Activated B cell treated with CpG ODN at 0.5 μM for 24 hours (primary cell): ENCODE measurements at regions of chr11 and their contacts with region 1.

Region 1: GRCh38 chr11:78416305-78417178 is 1.1 kb downstream of the GAB2 start:
- DNase-seq: peak; percentile 71
- ATAC-seq: peak; percentile 51
- H3K4me3 Mint-ChIP-seq: peak overlapping the region; percentile 98
- H3K27ac Mint-ChIP-seq: peak overlapping the region; percentile 96
- H3K4me1 Mint-ChIP-seq: peaks cover 79% of the 10 kb centered on the region
- H3K27me3 Mint-ChIP-seq: no peaks in the 10 kb centered on the region
- CTCF ChIP-seq: no peak

Region 2: DNA sequence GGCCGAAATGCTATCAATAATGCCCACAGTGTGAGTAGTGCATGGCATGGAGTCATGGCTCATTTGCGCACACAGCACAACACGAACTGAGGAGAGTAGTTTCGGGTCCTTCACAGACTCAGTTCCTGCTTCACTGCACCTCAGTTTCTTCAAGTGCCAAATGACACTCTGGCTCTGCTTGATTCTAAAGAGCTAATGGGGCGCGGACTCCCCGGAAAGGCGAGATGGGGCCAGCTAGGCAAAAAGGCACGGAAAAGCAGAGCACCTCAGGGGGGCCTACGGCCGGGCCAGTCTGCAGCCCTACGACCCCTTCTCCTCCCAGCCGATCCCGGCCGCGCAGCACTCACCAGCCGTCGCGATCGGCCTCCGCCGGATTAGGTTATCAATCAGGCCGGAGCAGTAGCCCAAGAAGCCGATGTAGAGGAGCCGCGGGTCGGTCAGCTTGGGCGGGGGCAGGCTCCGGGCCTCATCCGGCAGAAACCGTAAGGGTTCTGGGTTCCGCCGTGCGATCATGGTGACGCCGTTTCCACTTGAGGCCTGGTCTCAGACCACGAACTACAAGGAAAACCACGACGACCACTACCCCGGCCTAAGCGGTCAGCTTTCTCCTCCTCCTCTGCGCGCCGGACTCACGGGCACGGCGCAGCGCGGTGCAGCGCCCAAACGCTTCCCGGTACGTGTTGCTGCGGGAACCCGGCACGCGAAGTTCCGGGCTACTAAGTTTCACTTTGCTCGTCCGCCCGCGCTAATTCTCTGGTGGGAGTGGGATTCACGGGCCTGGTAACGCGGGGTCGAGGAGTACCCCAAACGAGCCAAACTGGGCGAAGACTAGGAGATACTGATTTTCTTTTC is 337.1 kb before region 1 on chr11 and contains the start of gene NDUFC2:
- CTCF ChIA-PET with region 1: no interaction called
- POLR2A ChIA-PET with region 1: interaction called, 3 read pairs
- intact Hi-C with region 1: loop called (anchors 2 kb)
- DNase-seq: peak; percentile 60
- ATAC-seq: peak; percentile 79
- H3K4me3 Mint-ChIP-seq: peak within 1 kb of the TSS; percentile 93
- H3K27ac Mint-ChIP-seq: peak within 1 kb of the TSS; percentile 86
- H3K4me1 Mint-ChIP-seq: peaks cover 51% of the 10 kb centered on the region
- H3K27me3 Mint-ChIP-seq: no peaks in the 10 kb centered on the region
- CTCF ChIP-seq: no peak
- total RNA-seq, gene NDUFC2: 83.5 and 88.4 TPM in 2 replicates

Region 3: DNA sequence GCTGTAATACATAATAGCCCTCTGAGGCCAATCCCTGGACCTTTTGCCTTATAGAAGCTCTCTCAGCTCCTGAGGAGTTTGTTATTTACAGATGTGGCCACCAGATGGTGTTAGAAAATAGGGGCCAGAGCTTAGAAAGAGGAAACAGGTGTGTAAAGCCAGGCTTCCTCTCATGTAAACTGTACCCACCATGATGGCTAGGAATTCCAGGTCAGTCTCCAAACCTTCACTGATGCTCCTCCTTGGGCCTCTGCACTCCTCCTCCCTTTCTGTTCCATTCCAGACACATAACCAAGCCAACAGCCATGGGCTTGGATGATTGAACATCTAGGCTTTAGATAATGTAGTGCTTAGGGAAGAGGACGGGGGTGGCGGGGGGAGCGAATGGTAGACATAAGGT is 188.1 kb before region 1 on chr11:
- CTCF ChIA-PET with region 1: interaction called, 9 read pairs
- POLR2A ChIA-PET with region 1: interaction called, 8 read pairs
- intact Hi-C with region 1: loop called (anchors 1 kb)
- DNase-seq: no peak
- ATAC-seq: peak; percentile 66
- H3K4me3 Mint-ChIP-seq: no peak overlapping the region
- H3K27ac Mint-ChIP-seq: no peak overlapping the region
- H3K4me1 Mint-ChIP-seq: peaks cover 42% of the 10 kb centered on the region
- H3K27me3 Mint-ChIP-seq: no peaks in the 10 kb centered on the region
- CTCF ChIP-seq: no peak

Region 4: GRCh38 chr11:78432058-78432515 is 15.5 kb after region 1 on chr11:
- CTCF ChIA-PET with region 1: interaction called, 90 read pairs
- POLR2A ChIA-PET with region 1: interaction called, 113 read pairs
- intact Hi-C with region 1: loop called (anchors 1 kb)
- DNase-seq: no peak
- ATAC-seq: no peak
- H3K4me3 Mint-ChIP-seq: no peak overlapping the region
- H3K27ac Mint-ChIP-seq: peak overlapping the region; percentile 41
- H3K4me1 Mint-ChIP-seq: peaks cover 40% of the 10 kb centered on the region
- H3K27me3 Mint-ChIP-seq: no peaks in the 10 kb centered on the region
- CTCF ChIP-seq: no peak

Region 5: GRCh38 chr11:78465169-78465942 is 48.8 kb after region 1 on chr11:
- CTCF ChIA-PET with region 1: interaction called, 3 read pairs
- POLR2A ChIA-PET with region 1: interaction called, 16 read pairs
- intact Hi-C with region 1: loop called (anchors 1 kb)
- DNase-seq: peak; percentile 35
- ATAC-seq: peak; percentile 93
- H3K4me3 Mint-ChIP-seq: peak overlapping the region; percentile 64
- H3K27ac Mint-ChIP-seq: peak overlapping the region; percentile 90
- H3K4me1 Mint-ChIP-seq: peaks cover 44% of the 10 kb centered on the region
- H3K27me3 Mint-ChIP-seq: no peaks in the 10 kb centered on the region
- CTCF ChIP-seq: no peak

Region 6: DNA sequence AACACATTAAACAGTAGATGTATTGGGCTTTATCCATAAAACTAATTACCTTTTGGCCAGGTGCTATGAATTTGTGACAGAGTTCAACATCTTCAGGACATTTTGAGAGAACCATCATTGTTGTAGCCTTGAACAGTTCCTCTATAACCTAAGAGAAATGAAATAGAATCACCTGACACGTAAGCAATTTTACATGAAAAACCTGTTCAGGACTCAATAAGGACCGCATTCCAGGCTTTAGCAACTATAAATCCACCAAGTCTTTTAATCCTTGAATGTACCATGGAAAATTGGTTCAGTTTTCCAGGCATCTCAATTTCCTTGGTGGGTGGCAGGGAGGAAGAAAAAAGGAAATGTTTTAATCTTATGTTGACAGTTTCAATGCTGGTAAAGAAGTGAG is 62.0 kb after region 1 on chr11:
- CTCF ChIA-PET with region 1: no interaction called
- POLR2A ChIA-PET with region 1: no interaction called
- intact Hi-C with region 1: no loop called
- DNase-seq: no peak
- ATAC-seq: no peak
- H3K4me3 Mint-ChIP-seq: no peak overlapping the region
- H3K27ac Mint-ChIP-seq: no peak overlapping the region
- H3K4me1 Mint-ChIP-seq: peaks cover 7% of the 10 kb centered on the region
- H3K27me3 Mint-ChIP-seq: no peaks in the 10 kb centered on the region
- CTCF ChIP-seq: no peak